ENCODE measurements at regions of chr6 and their contacts with region 1.

Region 1: GRCh38 chr6:36615018-36615761 is 21.0 kb downstream of the SRSF3 start:
- DNase-seq: peak; percentile 20 to 79
- ATAC-seq: peak; percentile 51 to 61
- H3K4me3 ChIP-seq: no peak overlapping the region
- H3K27ac ChIP-seq: peak overlapping the region; percentile 82 to 87 (median 86)
- H3K4me1 ChIP-seq: peaks cover 29 to 31% of the 10 kb centered on the region in 2 donors
- H3K27me3 ChIP-seq: no peaks in the 10 kb centered on the region
- CTCF ChIP-seq: peak; percentile 61 to 85 (median 69)
- POLR2A ChIP-seq: no peak

Region 2: GRCh38 chr6:36594029-36594815 is 21.0 kb before region 1 on chr6 and contains the start of gene SRSF3:
- in situ Hi-C with region 1: no loop called
- intact Hi-C with region 1: loop called (anchors 1 kb)
- DNase-seq: peak; percentile 96 to 97
- ATAC-seq: peak; percentile 93 to 95
- H3K4me3 ChIP-seq: peak within 1 kb of the TSS; percentile 69 to 94 (median 78)
- H3K27ac ChIP-seq: peak within 1 kb of the TSS; percentile 93 to 99 (median 97)
- H3K4me1 ChIP-seq: peaks cover 28 to 36% of the 10 kb centered on the region in 2 donors
- H3K27me3 ChIP-seq: no peaks in the 10 kb centered on the region
- CTCF ChIP-seq: peak; percentile 30 to 70 (median 66)
- POLR2A ChIP-seq: peak; percentile 100
- total RNA-seq, gene SRSF3: 66.3 to 118 (median 83.2) TPM

Region 3: GRCh38 chr6:36752886-36753506 is 137.8 kb after region 1 on chr6:
- in situ Hi-C with region 1: loop called (anchors 5 to 10 kb)
- intact Hi-C with region 1: loop called (anchors 2 kb)
- DNase-seq: peak; percentile 71 to 92
- ATAC-seq: peak; percentile 92 to 93
- H3K4me3 ChIP-seq: no peak overlapping the region
- H3K27ac ChIP-seq: peak overlapping the region; percentile 85 to 93 (median 90)
- H3K4me1 ChIP-seq: peaks cover 21 to 25% of the 10 kb centered on the region in 2 donors
- H3K27me3 ChIP-seq: no peaks in the 10 kb centered on the region
- CTCF ChIP-seq: no peak
- POLR2A ChIP-seq: no peak

Region 4: DNA sequence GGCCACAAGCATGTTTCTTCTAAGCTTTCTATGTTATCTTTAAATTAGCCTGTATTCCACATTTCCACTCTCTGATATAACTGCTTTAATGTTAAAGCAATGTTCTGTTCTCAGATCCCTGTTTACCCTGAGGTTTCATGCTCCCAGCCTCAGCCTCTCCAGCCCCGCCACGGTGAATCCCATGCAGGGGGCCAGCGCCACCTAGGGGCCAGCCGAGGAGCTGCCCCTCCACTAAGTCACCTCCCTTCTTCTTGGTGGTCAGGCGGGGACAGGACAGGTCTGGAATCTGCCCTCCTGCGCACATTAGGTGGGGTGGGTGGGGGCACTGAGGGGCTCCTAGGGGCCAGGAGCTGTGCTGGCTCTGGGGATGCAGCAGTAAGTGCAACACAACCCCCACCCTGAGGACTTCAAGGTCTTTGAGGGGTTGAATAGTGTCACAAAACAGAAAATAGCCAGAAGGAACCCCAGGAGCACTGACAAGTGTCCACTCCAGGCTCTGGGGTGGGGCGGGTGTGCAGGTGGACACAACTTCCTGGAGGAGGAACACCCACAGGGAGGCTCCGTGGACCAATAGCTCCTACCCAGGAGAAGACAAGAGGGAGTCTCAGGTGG is 144.1 kb after region 1 on chr6:
- in situ Hi-C with region 1: loop called (anchors 5 to 10 kb)
- intact Hi-C with region 1: no loop called
- DNase-seq: peak; percentile 68 to 73
- ATAC-seq: peak; percentile 89 to 92
- H3K4me3 ChIP-seq: no peak overlapping the region
- H3K27ac ChIP-seq: no peak overlapping the region
- H3K4me1 ChIP-seq: peaks cover 0 to 3% of the 10 kb centered on the region in 2 donors
- H3K27me3 ChIP-seq: no peaks in the 10 kb centered on the region
- CTCF ChIP-seq: peak; percentile 91 to 100 (median 95)
- POLR2A ChIP-seq: no peak

Region 5: GRCh38 chr6:36851149-36851614 is 236.0 kb after region 1 on chr6:
- in situ Hi-C with region 1: loop called in 2 of 4 experiments (anchors 10 to 25 kb)
- intact Hi-C with region 1: loop called (anchors 5 kb)
- DNase-seq: peak in 1 of 2 donors; percentile 54
- ATAC-seq: peak; percentile 37 to 46
- H3K4me3 ChIP-seq: no peak overlapping the region
- H3K27ac ChIP-seq: no peak overlapping the region
- H3K4me1 ChIP-seq: peaks cover 29 to 34% of the 10 kb centered on the region in 2 donors
- H3K27me3 ChIP-seq: no peaks in the 10 kb centered on the region
- CTCF ChIP-seq: peak; percentile 69 to 79 (median 73)
- POLR2A ChIP-seq: no peak

Region 6: GRCh38 chr6:36997811-36998722 is 382.9 kb after region 1 on chr6:
- in situ Hi-C with region 1: no loop called
- intact Hi-C with region 1: loop called (anchors 1 kb)
- DNase-seq: peak; percentile 68 to 90
- ATAC-seq: peak; percentile 82 to 87
- H3K4me3 ChIP-seq: peak overlapping the region in 2 of 4 donors; percentile 30 to 43
- H3K27ac ChIP-seq: peak overlapping the region; percentile 93 to 100 (median 96)
- H3K4me1 ChIP-seq: peaks cover 21 to 25% of the 10 kb centered on the region in 2 donors
- H3K27me3 ChIP-seq: no peaks in the 10 kb centered on the region
- CTCF ChIP-seq: no peak
- POLR2A ChIP-seq: no peak

Measured in gastrocnemius medialis (tissue), 4 donors.